ENCODE measurements at regions of chr9 and their contacts with region 1.

Region 1: GRCh38 chr9:121059998-121060636 is 10.0 kb upstream of the C5 start:
- DNase-seq: no peak
- H3K4me3 ChIP-seq: no peak overlapping the region
- H3K27ac ChIP-seq: no peak overlapping the region
- H3K4me1 ChIP-seq: no peaks in the 10 kb centered on the region
- H3K27me3 ChIP-seq: no peaks in the 10 kb centered on the region
- CTCF ChIP-seq: peak in 2 of 3 experiments; percentile 72 to 76; a peak in 3 of 4 replicates
- EP300 ChIP-seq: no peak
- POLR2A ChIP-seq: no peak
- RAD21 ChIP-seq: peak; percentile 52 to 71

Region 2: DNA sequence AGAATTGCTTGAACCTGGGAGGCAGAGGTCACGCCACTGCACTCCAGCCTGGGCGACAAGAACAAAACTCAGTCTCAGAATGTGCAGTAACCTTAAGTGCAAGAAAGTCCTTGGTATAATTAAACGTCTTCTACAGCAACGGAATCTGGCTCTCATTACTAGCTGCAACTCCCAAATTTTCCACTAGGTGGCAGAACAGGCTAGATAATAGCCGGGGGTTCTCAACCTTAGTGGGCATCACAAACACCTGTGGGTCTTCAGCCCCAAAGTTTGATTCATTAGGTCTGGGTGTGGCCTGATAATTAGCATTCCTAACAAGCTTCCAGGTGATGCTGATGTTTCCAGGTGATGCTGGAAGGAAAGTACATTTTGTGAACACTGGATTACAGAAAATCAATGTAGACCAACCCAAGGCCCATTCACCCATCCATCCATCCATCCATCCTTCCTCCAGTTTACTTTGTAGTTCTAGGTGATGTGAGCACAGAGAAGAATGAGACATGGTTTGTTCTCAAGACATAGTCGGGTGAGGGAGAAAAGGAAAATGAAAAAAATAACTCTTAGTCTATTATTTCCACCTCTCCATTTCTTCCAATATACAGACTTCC is 304.2 kb before region 1 on chr9:
- CTCF ChIA-PET with region 1: interaction called, 30 read pairs
- POLR2A ChIA-PET with region 1: no interaction called
- DNase-seq: peak; percentile 13 to 85
- H3K4me3 ChIP-seq: no peak overlapping the region
- H3K27ac ChIP-seq: no peak overlapping the region
- H3K4me1 ChIP-seq: no peaks in the 10 kb centered on the region
- H3K27me3 ChIP-seq: no peaks in the 10 kb centered on the region
- CTCF ChIP-seq: peak in 2 of 3 experiments; percentile 84 to 85; a peak in 3 of 4 replicates
- EP300 ChIP-seq: no peak
- POLR2A ChIP-seq: no peak
- RAD21 ChIP-seq: peak; percentile 89 to 93

Region 3: GRCh38 chr9:121023064-121023463 is 37.1 kb before region 1 on chr9:
- CTCF ChIA-PET with region 1: interaction called, 16 read pairs
- POLR2A ChIA-PET with region 1: no interaction called
- DNase-seq: no peak
- H3K4me3 ChIP-seq: no peak overlapping the region
- H3K27ac ChIP-seq: no peak overlapping the region
- H3K4me1 ChIP-seq: no peaks in the 10 kb centered on the region
- H3K27me3 ChIP-seq: no peaks in the 10 kb centered on the region
- CTCF ChIP-seq: peak; percentile 17 to 30 (median 20); a peak in 2 of 4 replicates
- EP300 ChIP-seq: no peak
- POLR2A ChIP-seq: no peak
- RAD21 ChIP-seq: peak; percentile 26 to 38; a peak in 3 of 4 replicates

Region 4: DNA sequence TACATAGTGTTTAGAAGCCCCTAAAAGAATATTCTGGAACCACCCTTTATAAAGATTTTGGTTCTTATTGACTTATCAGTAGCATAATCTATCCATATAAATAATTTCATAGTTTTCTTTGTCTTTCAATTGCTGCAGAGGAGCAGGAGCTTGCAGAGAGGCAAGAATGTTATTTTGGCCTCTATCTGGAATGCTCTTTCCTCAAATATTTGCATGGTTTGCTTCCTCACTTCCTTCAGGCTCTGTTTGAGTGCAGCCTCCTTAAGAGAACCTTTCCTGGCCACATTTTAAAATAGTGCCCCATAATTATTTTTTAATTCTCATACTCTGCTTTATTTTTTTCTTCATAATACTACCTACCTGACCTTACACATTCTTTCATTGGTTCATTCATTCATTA is 11.5 kb before region 1 on chr9:
- CTCF ChIA-PET with region 1: interaction called, 41 read pairs
- POLR2A ChIA-PET with region 1: no interaction called
- DNase-seq: no peak
- H3K4me3 ChIP-seq: no peak overlapping the region
- H3K27ac ChIP-seq: no peak overlapping the region
- H3K4me1 ChIP-seq: peaks cover 0 to 3% (median 1%) of the 10 kb centered on the region in 4 experiments; a peak in 2 of 7 replicates
- H3K27me3 ChIP-seq: no peaks in the 10 kb centered on the region
- CTCF ChIP-seq: no peak
- EP300 ChIP-seq: no peak
- POLR2A ChIP-seq: no peak
- RAD21 ChIP-seq: no peak

Region 5: GRCh38 chr9:121082075-121082474 is 22.0 kb after region 1 on chr9:
- CTCF ChIA-PET with region 1: interaction called, 10 read pairs
- POLR2A ChIA-PET with region 1: interaction called, 3 read pairs
- DNase-seq: no peak
- H3K4me3 ChIP-seq: no peak overlapping the region
- H3K27ac ChIP-seq: no peak overlapping the region
- H3K4me1 ChIP-seq: no peaks in the 10 kb centered on the region
- H3K27me3 ChIP-seq: no peaks in the 10 kb centered on the region
- CTCF ChIP-seq: no peak
- EP300 ChIP-seq: no peak
- POLR2A ChIP-seq: no peak
- RAD21 ChIP-seq: no peak

Measured in H1 (cell line).